Posterior vena cava (tissue), 2 donors: ENCODE measurements at regions of chr19 and their contacts with region 1.

Region 1: GRCh38 chr19:1275260-1275975 is at the start of gene FAM174C:
- DNase-seq: peak; percentile 99
- total RNA-seq, gene FAM174C: 25.2 to 27.2 TPM

Region 2: GRCh38 chr19:1154731-1155351 is 120.6 kb before region 1 on chr19:
- intact Hi-C with region 1: no loop called
- DNase-seq: peak; percentile 97

Region 3: DNA sequence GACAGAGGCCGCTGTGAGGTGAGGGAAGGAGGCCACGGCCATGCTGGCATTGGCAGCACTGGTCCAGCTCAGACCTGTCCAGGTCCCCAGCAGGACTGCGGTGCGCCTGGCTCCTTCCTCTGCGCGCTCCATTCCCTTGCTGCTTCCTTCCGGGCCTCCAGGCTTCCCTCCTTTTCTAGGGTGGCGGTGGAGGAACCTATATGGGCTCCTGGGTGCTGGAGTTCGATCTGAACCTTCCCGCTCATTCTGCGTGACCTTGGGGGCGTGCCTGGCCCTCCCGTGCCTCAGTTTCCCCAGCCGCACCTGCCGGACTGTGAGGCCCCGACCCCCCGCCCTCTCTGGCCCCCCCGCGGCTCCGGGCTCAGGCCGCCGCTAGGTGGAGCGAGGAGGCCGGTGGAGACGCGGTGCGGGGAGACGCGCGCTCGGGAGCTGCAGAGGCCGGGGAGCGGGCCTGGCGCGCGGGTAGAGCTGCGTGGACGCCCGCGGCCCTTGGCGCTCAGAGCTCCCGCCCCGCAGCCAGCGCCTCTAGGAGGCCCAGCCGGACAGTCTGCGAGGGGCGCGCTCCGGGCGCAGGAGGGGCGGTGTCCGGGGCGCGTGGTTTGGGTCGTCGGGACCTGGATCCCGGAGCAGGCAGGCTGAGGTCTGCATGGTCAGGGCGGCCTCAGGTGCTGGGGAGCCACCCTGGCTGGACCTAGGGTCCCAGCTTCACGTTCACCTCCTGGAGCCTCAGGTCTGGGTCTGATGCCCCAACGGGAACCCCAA is 40.2 kb after region 1 on chr19:
- intact Hi-C with region 1: no loop called
- DNase-seq: no peak

Region 4: GRCh38 chr19:1355568-1356507 is 80.4 kb after region 1 on chr19:
- intact Hi-C with region 1: loop called in 1 of 2 experiments (anchors 5 kb)
- DNase-seq: no peak

Region 5: DNA sequence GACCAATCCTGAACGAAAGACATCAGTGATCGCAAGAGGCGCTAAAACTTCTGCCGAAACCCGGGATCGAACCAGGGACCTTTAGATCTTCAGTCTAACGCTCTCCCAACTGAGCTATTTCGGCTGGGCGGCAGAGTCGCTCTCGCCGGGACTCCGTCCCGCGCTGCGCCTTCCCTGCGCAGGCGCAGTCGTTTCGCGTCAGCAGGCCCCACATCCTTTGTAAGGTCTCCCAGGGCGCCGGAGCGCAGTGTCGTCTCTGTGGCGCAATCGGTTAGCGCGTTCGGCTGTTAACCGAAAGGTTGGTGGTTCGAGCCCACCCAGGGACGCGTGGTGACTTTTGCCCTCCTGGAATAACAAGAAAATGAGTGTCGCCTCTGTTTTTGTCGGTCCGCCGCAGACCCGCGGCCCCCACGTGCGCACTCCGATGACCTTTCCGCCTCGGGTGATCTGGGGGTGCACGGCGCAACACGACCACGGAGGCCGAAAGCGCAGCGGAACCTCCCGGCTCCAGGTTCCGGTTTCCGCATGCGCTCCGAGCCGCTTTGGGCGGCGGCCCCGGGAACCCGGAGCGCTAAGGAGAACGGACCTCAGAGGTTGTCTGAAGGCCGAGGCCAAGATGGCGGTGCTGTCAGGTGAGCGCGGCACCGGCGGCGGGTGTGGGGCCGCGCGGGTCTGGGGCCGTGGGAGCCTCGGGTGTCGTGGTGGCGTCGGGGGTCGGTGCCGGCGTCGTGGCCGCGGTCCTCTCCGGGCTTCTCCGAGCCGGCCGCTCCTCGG is 108.1 kb after region 1 on chr19 and contains the start of gene NDUFS7:
- intact Hi-C with region 1: loop called in 1 of 2 experiments (anchors 10 kb)
- DNase-seq: peak; percentile 96
- total RNA-seq, gene NDUFS7: 54.4 to 55.1 TPM

Region 6: DNA sequence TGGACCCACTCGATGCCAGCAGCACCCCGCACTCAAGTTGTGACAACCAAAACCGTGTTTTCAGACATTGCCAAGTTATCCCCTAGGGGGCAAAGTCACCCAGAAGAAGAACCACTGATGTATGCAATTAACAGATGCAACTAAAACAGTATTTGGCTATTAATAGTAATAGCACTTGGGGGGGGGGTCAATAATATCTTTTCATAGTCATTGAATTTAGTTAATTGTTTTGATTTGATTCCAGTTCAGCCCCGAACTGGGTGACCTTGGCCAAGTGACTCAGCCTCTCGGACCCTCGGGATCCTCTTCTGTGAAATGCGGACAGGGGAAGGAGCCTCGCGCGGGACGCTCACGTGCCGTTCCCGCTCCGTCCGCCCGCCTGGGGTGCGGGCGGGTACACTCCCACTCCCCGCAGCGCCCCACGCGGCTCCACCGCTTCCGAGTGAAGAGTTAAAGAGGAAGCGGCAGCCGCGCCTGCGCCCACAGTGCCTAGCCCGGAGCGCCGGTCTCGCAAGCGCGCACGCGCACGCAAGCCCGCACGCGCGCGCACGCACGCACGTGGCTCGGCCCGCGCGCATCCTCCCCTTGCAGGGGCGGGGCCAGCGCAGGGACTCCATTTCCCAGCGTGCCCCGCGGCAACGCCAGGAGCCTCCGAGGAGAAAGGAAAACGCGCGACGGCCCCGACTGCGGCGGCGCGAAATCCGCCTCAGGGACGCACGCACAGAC is 131.5 kb after region 1 on chr19:
- intact Hi-C with region 1: loop called in 1 of 2 experiments (anchors 10 kb)
- DNase-seq: peak; percentile 100

Region 7: GRCh38 chr19:1455336-1456120 is 180.1 kb after region 1 on chr19:
- intact Hi-C with region 1: loop called in 1 of 2 experiments (anchors 10 kb)
- DNase-seq: no peak